Heart right ventricle (tissue), 16 donors: ENCODE measurements at regions of chr2 and their contacts with region 1.

Region 1: DNA sequence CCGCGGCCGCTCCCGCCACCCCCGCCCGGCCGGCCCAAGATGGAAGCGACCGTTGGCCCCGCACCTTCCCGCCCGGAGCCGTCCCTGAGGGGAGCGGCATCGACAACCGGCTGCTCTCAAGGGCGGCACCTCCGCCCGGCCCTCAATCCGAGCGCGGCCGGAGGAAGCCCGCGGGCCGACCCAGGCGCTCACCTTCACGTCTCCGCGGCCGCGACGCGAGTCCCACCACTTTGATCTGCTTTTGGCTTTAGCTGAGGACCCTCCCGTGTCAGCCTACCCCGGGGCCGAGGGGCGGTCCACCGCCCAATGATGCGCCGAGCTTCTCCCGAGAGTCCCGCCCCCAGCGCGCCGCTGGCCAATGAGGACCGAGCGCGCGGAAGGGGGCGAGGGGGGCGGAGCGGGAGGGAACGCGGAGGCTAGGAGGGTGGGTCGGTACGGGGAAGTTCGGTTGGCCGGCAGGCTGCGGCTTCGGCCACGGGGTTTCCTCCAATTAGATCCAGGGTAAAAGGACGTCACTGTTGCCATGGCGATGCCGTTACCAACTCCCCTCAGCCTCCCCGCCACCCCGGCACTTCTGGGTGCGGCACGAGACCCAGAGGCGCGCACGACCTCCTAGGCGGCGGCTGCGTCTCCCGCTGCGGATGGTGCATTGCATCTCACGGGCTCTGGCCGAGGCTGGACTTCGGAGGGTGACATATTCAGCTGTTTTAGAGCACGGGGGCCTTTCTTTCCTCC is at the start of gene YWHAQ:
- DNase-seq: peak; percentile 99
- ATAC-seq: peak; percentile 96 to 99 (median 98)
- H3K4me3 ChIP-seq: peak within 1 kb of the TSS; percentile 29 to 96 (median 82)
- H3K27ac ChIP-seq: peak within 1 kb of the TSS; percentile 70 to 98 (median 94)
- H3K4me1 ChIP-seq: peaks cover 12 to 63% (median 49%) of the 10 kb centered on the region in 9 donors
- H3K27me3 ChIP-seq: no peaks in the 10 kb centered on the region
- CTCF ChIP-seq: no peak
- total RNA-seq, gene YWHAQ: 134 to 303 (median 207) TPM

Region 2: GRCh38 chr2:9474361-9474967 is 156.5 kb before region 1 on chr2 and contains the start of gene IAH1:
- intact Hi-C with region 1: loop called in 1 of 10 experiments (anchors 5 kb)
- DNase-seq: peak; percentile 40 to 79
- ATAC-seq: peak; percentile 82 to 94 (median 90)
- H3K4me3 ChIP-seq: peak within 1 kb of the TSS; percentile 59 to 95 (median 82)
- H3K27ac ChIP-seq: peak within 1 kb of the TSS; percentile 64 to 92 (median 90)
- H3K4me1 ChIP-seq: peaks cover 0 to 53% (median 29%) of the 10 kb centered on the region in 9 donors
- H3K27me3 ChIP-seq: no peaks in the 10 kb centered on the region
- CTCF ChIP-seq: peak in 4 of 9 donors; percentile 9 to 30 (median 18)
- total RNA-seq, gene IAH1: 77.1 to 94.5 (median 87.7) TPM

Region 3: DNA sequence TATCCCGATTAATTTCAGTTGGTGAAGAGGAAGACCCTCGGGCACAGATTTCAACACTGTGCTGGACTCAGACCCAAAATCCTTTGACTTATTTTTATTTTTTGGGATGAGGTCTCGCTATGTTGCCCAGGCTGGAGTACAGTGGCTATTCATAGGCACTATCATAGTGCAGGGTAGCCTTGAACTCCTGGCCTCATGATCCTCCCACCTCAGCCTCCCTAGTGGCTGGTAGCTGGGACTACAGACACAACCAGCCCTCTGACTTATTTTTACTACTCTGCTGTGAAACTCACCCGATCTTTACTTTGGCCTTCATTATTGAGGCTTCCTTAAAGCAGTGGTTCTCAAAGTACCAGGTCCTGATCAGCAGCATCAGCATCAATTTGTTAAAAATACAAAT is 57.1 kb before region 1 on chr2:
- intact Hi-C with region 1: loop called in 1 of 10 experiments (anchors 10 kb)
- DNase-seq: no peak
- ATAC-seq: no peak
- H3K4me3 ChIP-seq: no peak overlapping the region
- H3K27ac ChIP-seq: peak overlapping the region in 9 of 10 donors; percentile 7 to 79 (median 58)
- H3K4me1 ChIP-seq: peaks cover 0 to 51% (median 27%) of the 10 kb centered on the region in 9 donors
- H3K27me3 ChIP-seq: no peaks in the 10 kb centered on the region
- CTCF ChIP-seq: no peak

Region 4: DNA sequence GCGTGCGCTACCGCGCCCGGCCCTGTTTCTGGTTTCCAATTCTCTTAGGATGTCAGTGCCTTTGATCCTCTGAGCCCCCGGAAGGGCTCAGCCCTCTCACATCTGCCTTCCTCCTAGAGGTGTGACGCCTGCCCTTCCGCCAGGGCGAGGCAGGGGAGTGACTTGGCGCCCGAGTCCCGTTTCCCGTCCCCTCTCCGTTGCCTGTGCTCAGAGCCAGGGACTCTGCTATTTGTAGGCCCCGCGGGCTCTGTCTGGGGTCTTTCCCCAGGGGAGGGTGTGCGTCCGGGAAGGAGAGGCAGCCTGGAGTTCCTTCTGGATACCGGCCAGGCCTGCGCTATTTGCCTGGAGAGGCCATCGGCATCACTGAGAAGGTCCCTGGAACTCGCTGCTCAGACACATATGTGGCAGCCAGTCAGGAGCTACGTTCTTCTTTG is 108.6 kb after region 1 on chr2:
- intact Hi-C with region 1: loop called in 2 of 10 experiments (anchors 5 kb)
- DNase-seq: peak; percentile 86 to 91
- ATAC-seq: peak; percentile 86 to 93 (median 90)
- H3K4me3 ChIP-seq: peak overlapping the region in 9 of 10 donors; percentile 14 to 53 (median 40)
- H3K27ac ChIP-seq: peak overlapping the region; percentile 70 to 92 (median 88)
- H3K4me1 ChIP-seq: peaks cover 9 to 42% (median 28%) of the 10 kb centered on the region in 9 donors
- H3K27me3 ChIP-seq: no peaks in the 10 kb centered on the region
- CTCF ChIP-seq: no peak

Region 5: GRCh38 chr2:9763356-9764152 is 132.6 kb after region 1 on chr2:
- intact Hi-C with region 1: loop called in 3 of 10 experiments (anchors 5 to 10 kb)
- DNase-seq: no peak
- ATAC-seq: peak in 5 of 8 donors; percentile 20 to 56 (median 47)
- H3K4me3 ChIP-seq: no peak overlapping the region
- H3K27ac ChIP-seq: peak overlapping the region in 7 of 10 donors; percentile 16 to 74 (median 44)
- H3K4me1 ChIP-seq: peaks cover 0 to 78% (median 38%) of the 10 kb centered on the region in 9 donors
- H3K27me3 ChIP-seq: no peaks in the 10 kb centered on the region
- CTCF ChIP-seq: no peak